ENCODE measurements at regions of chr1 and their contacts with region 1.

Region 1: DNA sequence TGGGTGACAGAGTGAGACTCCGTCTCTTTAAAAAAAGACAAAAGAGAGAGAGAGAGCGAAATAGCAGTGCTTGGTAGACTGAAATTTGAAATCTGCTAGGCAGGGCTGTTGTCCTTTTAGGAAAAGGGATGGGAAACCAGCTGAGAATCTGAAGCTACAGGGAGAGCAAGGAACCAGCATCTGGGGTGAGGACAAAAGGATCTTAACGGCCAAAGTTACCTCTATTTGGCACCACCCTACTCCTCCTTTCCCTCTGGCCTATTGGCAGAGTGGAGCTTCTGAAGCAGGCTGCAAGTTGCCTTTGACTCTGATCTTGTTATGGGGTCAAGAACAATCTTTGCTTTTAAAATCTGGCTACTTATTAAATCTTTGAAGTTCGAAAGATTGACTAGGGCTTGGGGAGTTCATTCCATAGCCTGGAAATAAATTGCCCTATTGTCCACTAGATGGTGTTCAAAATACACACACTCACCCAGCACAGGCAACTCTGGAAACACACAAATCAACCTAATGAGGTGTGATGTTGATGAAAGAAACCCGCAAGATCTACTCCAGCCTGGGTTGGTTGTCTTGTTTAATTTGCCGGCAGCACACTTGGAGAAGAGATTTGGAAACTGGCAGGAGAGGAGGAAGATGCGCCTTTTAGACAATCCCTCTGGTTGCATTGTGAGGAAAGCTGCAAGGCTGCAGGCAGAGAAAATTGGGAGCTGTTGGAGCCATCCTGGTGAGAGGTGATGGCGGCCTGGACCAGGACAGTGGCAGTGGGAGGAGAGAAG is 16.5 kb upstream of the PARP1 start:
- DNase-seq: peak; percentile 77
- H3K4me3 Mint-ChIP-seq: no peak overlapping the region
- H3K27ac Mint-ChIP-seq: no peak overlapping the region
- H3K4me1 Mint-ChIP-seq: no peaks in the 10 kb centered on the region
- H3K27me3 Mint-ChIP-seq: no peaks in the 10 kb centered on the region
- CTCF ChIP-seq: peak; percentile 88

Region 2: DNA sequence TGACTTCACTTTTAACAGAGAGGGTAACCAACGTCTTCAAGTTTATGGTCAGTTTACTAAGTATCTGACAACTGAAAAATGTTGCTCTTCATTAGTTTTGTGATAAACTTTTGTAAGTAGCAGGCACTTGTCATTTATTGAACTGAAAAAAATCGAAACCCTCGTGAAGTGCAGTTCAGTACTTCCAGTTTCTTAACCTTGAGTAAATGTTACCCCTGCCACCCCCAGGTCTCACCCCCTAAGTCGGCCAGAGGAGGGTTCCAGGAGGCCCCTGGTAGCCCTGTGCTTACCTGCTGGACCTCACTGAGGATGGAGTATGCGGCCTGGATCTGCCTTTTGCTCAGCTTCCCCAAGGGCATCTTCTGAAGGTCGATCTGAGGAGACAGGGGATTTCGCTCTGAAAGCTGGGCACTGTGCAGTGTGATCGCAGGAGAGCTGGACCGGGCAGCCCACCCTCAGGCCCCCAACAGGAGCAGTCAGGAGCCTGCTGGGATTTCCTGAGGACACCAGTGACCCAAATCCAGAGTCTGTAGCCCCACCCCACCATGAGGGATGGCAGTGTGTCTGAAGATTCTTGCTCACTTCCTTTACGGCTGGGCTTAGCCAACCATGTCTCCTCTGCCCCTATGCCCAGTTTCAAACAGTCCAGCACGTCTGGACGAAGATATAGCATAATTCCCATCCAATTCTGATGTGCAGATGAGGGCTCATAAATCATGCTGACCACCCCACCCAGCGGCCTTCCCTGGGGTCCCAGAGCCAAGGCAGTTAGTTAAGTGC is 54.1 kb before region 1 on chr1:
- CTCF ChIA-PET with region 1: no interaction called
- POLR2A ChIA-PET with region 1: no interaction called
- intact Hi-C with region 1: loop called (anchors 1 kb)
- DNase-seq: no peak
- H3K4me3 Mint-ChIP-seq: no peak overlapping the region
- H3K27ac Mint-ChIP-seq: peak overlapping the region; percentile 8
- H3K4me1 Mint-ChIP-seq: no peaks in the 10 kb centered on the region
- H3K27me3 Mint-ChIP-seq: no peaks in the 10 kb centered on the region
- CTCF ChIP-seq: no peak

Region 3: DNA sequence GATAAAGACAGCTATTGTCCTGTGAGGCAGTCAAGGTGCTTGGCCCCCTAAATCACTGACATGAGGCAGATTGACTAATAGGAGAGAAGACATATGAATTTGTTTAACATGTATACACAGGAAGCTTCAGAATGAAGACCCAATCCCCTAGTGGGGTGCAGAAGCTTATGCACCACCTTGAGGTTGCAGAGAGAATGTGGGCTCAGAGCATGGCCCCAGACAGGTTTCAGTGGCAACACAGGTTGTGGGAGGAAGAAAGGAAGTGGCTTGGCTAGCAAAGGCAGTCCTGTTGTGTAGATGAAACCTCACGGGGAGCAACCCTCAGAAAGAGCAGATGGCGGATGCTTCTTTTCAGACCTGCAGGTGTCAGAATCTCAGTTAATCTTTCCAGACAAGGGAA is 20.5 kb after region 1 on chr1:
- CTCF ChIA-PET with region 1: interaction called, 106 read pairs
- POLR2A ChIA-PET with region 1: no interaction called
- intact Hi-C with region 1: no loop called
- DNase-seq: no peak
- H3K4me3 Mint-ChIP-seq: no peak overlapping the region
- H3K27ac Mint-ChIP-seq: no peak overlapping the region
- H3K4me1 Mint-ChIP-seq: peaks cover 5% of the 10 kb centered on the region
- H3K27me3 Mint-ChIP-seq: peaks cover 47% of the 10 kb centered on the region
- CTCF ChIP-seq: no peak

Region 4: DNA sequence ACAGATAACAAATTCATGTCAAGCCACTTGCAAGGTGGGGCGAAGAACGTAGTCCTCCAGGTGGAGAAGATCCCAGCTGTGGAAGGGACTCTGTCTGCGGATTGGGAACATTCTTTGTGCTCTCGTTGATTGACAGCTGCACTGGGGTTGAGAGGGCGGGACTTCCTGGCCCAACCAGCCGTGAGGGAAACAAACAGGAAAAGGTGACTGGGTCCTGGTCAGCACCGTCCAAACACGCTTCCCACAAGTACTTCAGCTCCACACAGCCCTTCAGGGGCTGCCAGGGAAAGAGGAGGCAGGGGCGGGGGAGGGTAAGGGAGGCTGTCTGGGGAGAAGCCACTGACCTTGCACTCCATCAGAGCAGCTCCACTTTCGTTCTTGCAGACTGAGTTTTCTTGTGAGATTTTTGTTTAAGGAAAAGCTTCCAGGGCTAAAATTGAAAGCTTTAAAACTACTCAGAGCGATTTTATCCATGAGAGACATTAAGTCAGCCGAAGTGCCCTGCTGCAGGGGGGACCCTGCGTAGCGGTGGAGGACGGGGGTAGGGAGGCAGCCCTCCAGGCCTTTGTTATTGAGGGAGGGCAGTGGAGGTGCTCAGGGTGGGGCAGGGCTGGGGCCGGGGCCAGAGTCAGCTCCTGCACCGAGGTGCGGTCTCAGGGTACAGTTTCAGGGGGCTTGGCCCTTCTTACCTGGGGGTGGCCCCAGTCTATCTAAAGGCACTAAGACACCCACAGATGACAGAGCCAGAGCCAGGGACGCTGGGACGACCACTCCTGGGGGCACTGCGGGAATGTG is 102.6 kb after region 1 on chr1:
- CTCF ChIA-PET with region 1: interaction called, 20 read pairs
- POLR2A ChIA-PET with region 1: no interaction called
- intact Hi-C with region 1: no loop called
- DNase-seq: peak; percentile 67
- H3K4me3 Mint-ChIP-seq: no peak overlapping the region
- H3K27ac Mint-ChIP-seq: no peak overlapping the region
- H3K4me1 Mint-ChIP-seq: no peaks in the 10 kb centered on the region
- H3K27me3 Mint-ChIP-seq: peaks cover 24% of the 10 kb centered on the region
- CTCF ChIP-seq: no peak

Region 5: GRCh38 chr1:226541631-226542622 is 117.5 kb after region 1 on chr1:
- CTCF ChIA-PET with region 1: interaction called, 21 read pairs
- POLR2A ChIA-PET with region 1: no interaction called
- intact Hi-C with region 1: loop called (anchors 1 kb)
- DNase-seq: peak; percentile 50
- H3K4me3 Mint-ChIP-seq: no peak overlapping the region
- H3K27ac Mint-ChIP-seq: no peak overlapping the region
- H3K4me1 Mint-ChIP-seq: peaks cover 11% of the 10 kb centered on the region
- H3K27me3 Mint-ChIP-seq: peaks cover 17% of the 10 kb centered on the region
- CTCF ChIP-seq: no peak

Region 6: GRCh38 chr1:226608699-226609505 is 184.5 kb after region 1 on chr1:
- CTCF ChIA-PET with region 1: interaction called, 20 read pairs
- POLR2A ChIA-PET with region 1: no interaction called
- intact Hi-C with region 1: loop called (anchors 1 kb)
- DNase-seq: peak; percentile 83
- H3K4me3 Mint-ChIP-seq: no peak overlapping the region
- H3K27ac Mint-ChIP-seq: no peak overlapping the region
- H3K4me1 Mint-ChIP-seq: peaks cover 6% of the 10 kb centered on the region
- H3K27me3 Mint-ChIP-seq: no peaks in the 10 kb centered on the region
- CTCF ChIP-seq: peak; percentile 99

Region 7: GRCh38 chr1:226827968-226828513 is 403.6 kb after region 1 on chr1:
- CTCF ChIA-PET with region 1: interaction called, 9 read pairs
- POLR2A ChIA-PET with region 1: no interaction called
- intact Hi-C with region 1: loop called (anchors 1 kb)
- DNase-seq: peak; percentile 100
- H3K4me3 Mint-ChIP-seq: no peak overlapping the region
- H3K27ac Mint-ChIP-seq: no peak overlapping the region
- H3K4me1 Mint-ChIP-seq: no peaks in the 10 kb centered on the region
- H3K27me3 Mint-ChIP-seq: no peaks in the 10 kb centered on the region
- CTCF ChIP-seq: peak; percentile 100